ENCODE measurements at regions of chr18 and their contacts with region 1.

Region 1: GRCh38 chr18:35355140-35355618 is 11.0 kb upstream of the ZNF24 start:
- DNase-seq: peak; percentile 62 to 81
- ATAC-seq: peak; percentile 88 to 100 (median 98)
- H3K4me3 ChIP-seq: peak overlapping the region; percentile 41
- H3K27ac ChIP-seq: peak overlapping the region; percentile 8
- H3K4me1 ChIP-seq: peaks cover 8% of the 10 kb centered on the region
- H3K27me3 ChIP-seq: no peaks in the 10 kb centered on the region
- CTCF ChIP-seq: peak; percentile 76

Region 2: GRCh38 chr18:35231052-35231451 is 124.1 kb before region 1 on chr18:
- intact Hi-C with region 1: loop called (anchors 2 to 5 kb)
- DNase-seq: peak; percentile 73 to 85
- ATAC-seq: peak; percentile 82 to 99 (median 93)
- H3K4me3 ChIP-seq: peak overlapping the region; percentile 49
- H3K27ac ChIP-seq: no peak overlapping the region
- H3K4me1 ChIP-seq: no peaks in the 10 kb centered on the region
- H3K27me3 ChIP-seq: no peaks in the 10 kb centered on the region
- CTCF ChIP-seq: peak; percentile 95

Region 3: DNA sequence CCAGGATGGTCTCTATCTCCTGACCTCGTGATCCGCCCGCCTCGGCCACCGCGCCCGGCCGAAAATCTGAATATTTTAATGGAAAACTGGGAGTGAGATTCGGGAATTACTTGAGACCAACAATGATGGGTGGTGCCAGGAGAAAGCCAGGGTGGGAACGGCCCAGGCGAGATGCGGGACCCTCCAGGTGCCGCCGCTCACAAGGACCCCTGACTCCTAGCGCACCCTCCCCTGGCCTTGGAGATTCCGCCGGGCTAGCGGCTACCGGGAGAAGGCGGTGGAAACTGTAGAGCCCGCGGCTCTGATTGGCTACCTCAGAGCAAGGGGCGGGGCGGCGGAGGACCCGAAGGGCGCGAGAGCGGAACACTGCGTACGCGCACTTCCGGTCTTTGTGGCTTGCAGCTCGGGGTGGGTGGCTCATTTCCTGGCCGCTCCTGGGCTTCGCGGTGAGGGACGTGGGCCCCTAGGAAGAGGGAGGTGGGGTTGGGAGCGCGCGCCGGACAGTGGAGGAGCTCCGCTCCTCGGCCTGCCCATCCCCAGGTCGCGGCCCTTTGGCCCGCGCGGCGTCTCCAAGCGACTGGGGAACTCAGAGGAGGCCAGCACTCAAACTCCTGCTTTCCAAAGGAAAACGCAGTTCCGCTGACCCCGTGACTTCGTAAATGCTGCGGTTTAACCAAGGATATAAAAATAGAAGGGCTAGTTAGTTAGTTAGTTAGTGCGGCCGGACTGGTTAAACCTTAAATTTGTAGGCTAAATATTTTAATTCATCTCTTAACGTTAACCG is 114.3 kb before region 1 on chr18 and contains the start of gene ZNF397:
- intact Hi-C with region 1: loop called in 1 of 2 experiments (anchors 5 kb)
- DNase-seq: peak; percentile 99
- ATAC-seq: peak; percentile 100
- H3K4me3 ChIP-seq: peak within 1 kb of the TSS; percentile 90
- H3K27ac ChIP-seq: peak within 1 kb of the TSS; percentile 99
- H3K4me1 ChIP-seq: peaks cover 12% of the 10 kb centered on the region
- H3K27me3 ChIP-seq: no peaks in the 10 kb centered on the region
- CTCF ChIP-seq: no peak
- total RNA-seq, gene ZNF397: 13.7 to 25.0 (median 18.7) TPM